Activated T-helper 1 cell treated with anti-CD3 and anti-CD28 coated beads, Interleukin-12 subunit alpha, Interleukin-12 subunit beta, Interleukin-2, Interleukin-4 antibody, amounts not matched to agents 30 ng/mL and 10 ng/mL and 1 ng/mL, durations not matched to agents 14 hours and 24 hours and 36 hours (primary cell): ENCODE measurements at regions of chr2 and their contacts with region 1.

Region 1: GRCh38 chr2:127387655-127388422 is at the start of gene MAP3K2:
- DNase-seq: peak; percentile 89
- H3K4me3 Mint-ChIP-seq: peak within 1 kb of the TSS; percentile 96
- H3K27ac Mint-ChIP-seq: peak within 1 kb of the TSS; percentile 98
- H3K4me1 Mint-ChIP-seq: peaks cover 74% of the 10 kb centered on the region
- H3K27me3 Mint-ChIP-seq: no peaks in the 10 kb centered on the region
- total RNA-seq, gene MAP3K2: 64.1 and 66.1 TPM in 2 replicates

Region 2: DNA sequence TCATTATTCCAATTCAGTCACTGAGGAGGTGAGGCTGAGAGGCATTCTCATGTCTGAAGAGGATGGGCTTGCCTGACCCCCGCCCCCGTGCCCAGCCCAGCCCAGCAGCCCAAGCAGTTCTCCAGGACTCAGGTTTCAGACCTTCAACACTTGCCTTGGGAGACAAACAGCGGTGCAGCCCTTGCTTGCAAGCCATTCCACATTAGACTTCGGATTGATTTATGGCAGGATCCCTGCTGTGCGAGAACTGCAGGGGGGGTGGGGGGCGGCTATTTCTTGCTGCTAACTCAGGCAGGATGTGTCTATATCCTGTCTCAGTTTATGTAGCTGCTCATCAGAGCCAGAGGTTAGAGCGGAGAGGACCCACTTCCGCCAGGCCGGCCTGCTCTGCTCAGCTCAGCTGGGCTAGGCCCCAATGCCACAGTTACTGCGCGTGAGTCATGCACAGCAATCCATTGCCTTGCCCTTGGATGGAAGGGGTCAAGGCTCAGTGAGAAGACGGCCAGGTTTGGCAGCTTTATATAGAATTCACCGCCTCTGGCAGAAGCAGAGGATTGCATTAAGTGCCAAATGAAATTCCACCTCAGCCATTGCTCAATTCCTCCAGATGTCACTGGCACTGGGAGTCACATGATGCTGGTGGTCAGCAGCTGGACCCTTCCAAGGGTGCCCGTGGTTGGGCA is 730.1 kb before region 1 on chr2:
- intact Hi-C with region 1: loop called (anchors 5 kb)
- DNase-seq: peak; percentile 70
- H3K4me3 Mint-ChIP-seq: peak overlapping the region; percentile 99
- H3K27ac Mint-ChIP-seq: peak overlapping the region; percentile 98
- H3K4me1 Mint-ChIP-seq: peaks cover 67% of the 10 kb centered on the region
- H3K27me3 Mint-ChIP-seq: no peaks in the 10 kb centered on the region

Region 3: GRCh38 chr2:127293748-127294562 is 93.9 kb before region 1 on chr2 and contains the start of gene ERCC3:
- intact Hi-C with region 1: loop called (anchors 1 kb)
- DNase-seq: peak; percentile 76
- H3K4me3 Mint-ChIP-seq: peak within 1 kb of the TSS; percentile 99
- H3K27ac Mint-ChIP-seq: peak within 1 kb of the TSS; percentile 98
- H3K4me1 Mint-ChIP-seq: peaks cover 23% of the 10 kb centered on the region
- H3K27me3 Mint-ChIP-seq: no peaks in the 10 kb centered on the region
- total RNA-seq, gene ERCC3: 63.1 and 65.5 TPM in 2 replicates

Region 4: GRCh38 chr2:127365211-127365643 is 22.6 kb before region 1 on chr2:
- intact Hi-C with region 1: no loop called
- DNase-seq: no peak
- H3K4me3 Mint-ChIP-seq: no peak overlapping the region
- H3K27ac Mint-ChIP-seq: peak overlapping the region; percentile 20
- H3K4me1 Mint-ChIP-seq: peaks cover 37% of the 10 kb centered on the region
- H3K27me3 Mint-ChIP-seq: no peaks in the 10 kb centered on the region

Region 5: GRCh38 chr2:127398239-127398590 is 10.4 kb after region 1 on chr2:
- intact Hi-C with region 1: loop called (anchors 1 kb)
- DNase-seq: peak; percentile 36
- H3K4me3 Mint-ChIP-seq: no peak overlapping the region
- H3K27ac Mint-ChIP-seq: no peak overlapping the region
- H3K4me1 Mint-ChIP-seq: peaks cover 26% of the 10 kb centered on the region
- H3K27me3 Mint-ChIP-seq: peaks cover 5% of the 10 kb centered on the region

Region 6: GRCh38 chr2:127464470-127465257 is 76.8 kb after region 1 on chr2:
- intact Hi-C with region 1: loop called (anchors 1 kb)
- DNase-seq: no peak
- H3K4me3 Mint-ChIP-seq: peak overlapping the region; percentile 46
- H3K27ac Mint-ChIP-seq: peak overlapping the region; percentile 85
- H3K4me1 Mint-ChIP-seq: peaks cover 38% of the 10 kb centered on the region
- H3K27me3 Mint-ChIP-seq: peaks cover 2% of the 10 kb centered on the region

Region 7: GRCh38 chr2:128027801-128028667 is 640.2 kb after region 1 on chr2 and contains the start of gene SAP130:
- intact Hi-C with region 1: loop called (anchors 1 kb)
- DNase-seq: peak; percentile 99
- H3K4me3 Mint-ChIP-seq: peak within 1 kb of the TSS; percentile 99
- H3K27ac Mint-ChIP-seq: peak within 1 kb of the TSS; percentile 93
- H3K4me1 Mint-ChIP-seq: peaks cover 23% of the 10 kb centered on the region
- H3K27me3 Mint-ChIP-seq: peaks cover 4% of the 10 kb centered on the region
- total RNA-seq, gene SAP130: 30.9 and 31.5 TPM in 2 replicates